ENCODE measurements at regions of chr13 and their contacts with region 1.

Region 1: DNA sequence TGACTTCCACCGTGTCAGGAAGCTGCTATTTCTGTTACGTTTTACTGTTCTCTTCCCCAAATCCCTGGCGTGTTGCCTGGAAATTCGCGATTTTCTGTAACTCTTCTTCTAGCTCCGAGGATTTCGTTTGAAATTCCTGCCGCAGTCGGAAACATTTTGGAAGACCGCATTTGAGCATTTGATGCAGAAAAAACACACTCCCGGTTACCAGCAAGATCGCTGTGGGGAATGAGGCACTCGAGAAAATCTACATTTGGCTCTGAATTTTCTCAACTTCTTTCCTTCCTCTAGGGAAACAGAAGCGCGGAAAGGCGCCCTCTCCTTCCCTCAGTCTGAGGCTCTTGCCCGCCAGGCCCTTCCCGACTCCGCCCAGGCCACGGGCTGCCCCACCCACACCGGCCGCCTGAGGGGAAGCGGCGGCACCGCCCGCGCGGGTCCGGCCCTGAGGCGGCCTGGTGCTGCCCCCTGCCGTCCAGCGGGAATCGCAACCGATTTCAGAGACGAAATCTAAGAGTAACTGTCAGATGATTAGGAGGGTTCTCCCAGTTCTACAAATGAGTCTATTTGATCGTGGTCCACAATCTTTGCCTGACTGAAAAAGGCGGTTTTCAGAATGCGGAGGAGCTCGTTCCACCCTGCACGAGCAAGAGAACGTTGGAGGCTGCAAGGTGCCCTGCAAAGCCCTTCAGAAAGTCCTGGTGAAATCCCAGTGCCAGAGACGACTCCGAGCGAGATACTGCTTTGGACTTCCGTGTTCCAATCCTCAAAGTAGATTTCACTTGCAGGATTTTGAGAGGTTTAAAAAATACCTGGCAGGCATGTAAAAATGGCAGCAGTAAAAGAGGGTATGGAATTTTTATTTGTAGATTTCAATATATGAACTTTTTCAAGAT is 18.4 kb upstream of the TUBGCP3 start:
- DNase-seq: peak; percentile 57
- H3K4me3 ChIP-seq: peak overlapping the region; percentile 66
- H3K27ac ChIP-seq: peak overlapping the region; percentile 69
- H3K27me3 ChIP-seq: peaks cover 12% of the 10 kb centered on the region
- CTCF ChIP-seq: peak; percentile 87

Region 2: DNA sequence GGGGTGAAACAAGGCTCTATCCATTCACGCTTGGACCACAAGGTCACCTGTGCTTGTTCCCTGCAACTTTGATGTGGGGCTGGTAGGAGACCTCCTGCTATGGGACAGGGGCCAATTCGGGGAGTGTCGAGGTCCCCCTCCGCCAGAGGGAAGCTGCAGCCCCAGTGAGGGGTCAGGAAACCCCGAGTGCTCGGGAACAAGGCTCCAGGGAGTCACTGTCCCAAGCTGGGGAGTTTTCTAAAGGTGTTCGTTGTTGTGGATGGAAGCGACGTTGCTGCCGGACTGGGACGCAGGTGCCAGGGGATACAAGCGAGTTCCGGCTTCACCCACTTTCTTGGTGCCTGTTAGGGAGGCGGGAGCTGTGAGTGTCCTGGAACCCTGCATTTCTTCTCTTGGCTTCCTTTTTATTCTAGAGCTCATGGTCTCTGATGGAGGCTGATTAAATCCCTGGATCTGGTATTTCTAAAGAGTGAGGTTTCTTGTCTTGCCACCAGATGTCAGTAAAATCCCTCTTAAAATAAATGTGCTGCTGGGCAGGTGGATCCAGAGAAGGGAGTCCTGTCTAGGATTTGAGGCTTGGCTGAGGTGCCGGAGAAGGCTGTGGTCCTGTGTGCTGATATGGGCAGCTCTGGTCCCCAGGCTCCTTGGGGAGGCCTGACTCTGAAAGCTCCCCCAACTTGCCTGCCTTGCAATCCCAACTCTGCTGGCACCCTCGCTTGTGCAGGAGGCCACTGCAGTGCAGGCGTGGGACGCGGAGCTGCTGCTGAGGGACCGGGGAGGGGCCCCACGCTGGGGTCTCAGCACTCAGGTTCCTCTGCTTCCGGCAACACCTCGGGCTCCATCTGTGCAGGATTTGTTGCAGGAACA is 1132.0 kb before region 1 on chr13:
- CTCF ChIA-PET with region 1: interaction called, 35 read pairs
- POLR2A ChIA-PET with region 1: no interaction called
- DNase-seq: peak; percentile 2
- H3K4me3 ChIP-seq: no peak overlapping the region
- H3K27ac ChIP-seq: no peak overlapping the region
- H3K27me3 ChIP-seq: peaks cover 4% of the 10 kb centered on the region
- CTCF ChIP-seq: peak; percentile 55

Region 3: DNA sequence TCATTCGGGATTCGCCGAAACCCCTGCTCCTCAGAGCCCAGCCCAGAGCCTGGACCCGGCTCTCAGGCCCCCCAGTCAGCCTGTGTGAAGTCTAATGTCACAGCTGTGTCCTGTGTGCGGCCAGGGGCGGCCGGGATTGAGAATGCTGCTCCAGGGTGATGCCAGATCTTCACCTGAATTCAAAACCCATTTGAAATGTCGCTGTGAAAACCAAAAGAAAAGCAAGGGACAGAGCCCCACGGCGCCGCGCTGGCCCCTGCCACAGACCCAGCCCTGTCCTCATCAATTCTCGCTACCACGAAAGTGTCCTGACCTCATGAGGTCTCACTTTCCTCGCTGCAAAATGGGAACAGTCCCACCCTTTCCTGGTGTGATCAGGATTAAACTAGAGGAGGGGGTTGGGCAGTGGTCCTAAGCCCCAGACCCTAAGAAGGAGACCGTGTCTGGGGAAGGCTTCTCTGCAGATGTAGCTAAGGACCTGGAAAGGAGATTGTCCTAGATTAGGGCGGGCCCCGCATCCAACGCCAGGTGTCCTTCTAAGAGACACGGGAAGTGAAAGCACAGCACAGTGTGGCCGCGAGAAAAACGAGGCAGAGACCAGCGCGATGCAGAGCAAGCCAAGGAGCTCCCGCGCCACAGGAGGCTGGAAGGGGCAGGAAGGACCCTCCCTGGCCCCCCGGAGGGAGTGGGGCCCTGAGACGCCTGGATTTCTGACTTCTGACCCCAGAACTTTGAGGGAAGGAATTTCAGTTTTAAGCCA is 264.2 kb before region 1 on chr13:
- CTCF ChIA-PET with region 1: no interaction called
- POLR2A ChIA-PET with region 1: no interaction called
- DNase-seq: no peak
- H3K4me3 ChIP-seq: no peak overlapping the region
- H3K27ac ChIP-seq: no peak overlapping the region
- H3K27me3 ChIP-seq: no peaks in the 10 kb centered on the region
- CTCF ChIP-seq: no peak

Region 4: DNA sequence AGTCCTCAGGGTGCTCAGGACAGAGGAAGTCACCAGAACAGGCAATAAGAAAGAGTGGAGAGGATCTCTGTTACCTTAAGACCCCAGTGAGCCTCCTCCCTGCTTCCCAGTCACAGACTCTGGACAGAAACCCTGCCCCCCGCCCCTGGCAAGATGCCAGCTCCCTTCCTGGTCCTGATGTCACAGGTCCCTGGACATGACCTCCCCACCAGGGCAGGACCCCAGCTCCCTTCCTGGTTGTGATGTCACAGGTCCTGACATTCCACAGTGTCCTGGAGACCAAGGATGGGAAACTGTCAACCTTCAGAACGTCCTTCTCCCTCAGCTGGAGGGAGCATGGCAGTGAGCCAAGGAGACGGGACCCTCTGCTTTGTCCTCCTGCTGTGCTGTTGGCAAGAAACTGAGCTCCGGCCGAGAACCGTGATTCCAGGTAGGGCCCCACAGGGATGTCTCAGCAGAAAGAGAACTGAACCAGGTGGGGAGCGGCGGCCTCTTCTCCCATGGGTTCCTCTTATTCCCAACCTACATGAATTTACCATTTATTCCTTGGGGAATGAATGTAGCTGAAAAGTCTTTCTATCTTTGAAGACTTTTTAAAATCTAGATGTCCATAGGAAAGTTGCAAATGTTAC is 230.2 kb before region 1 on chr13 and contains the start of gene SPACA7:
- CTCF ChIA-PET with region 1: no interaction called
- POLR2A ChIA-PET with region 1: no interaction called
- DNase-seq: no peak
- H3K4me3 ChIP-seq: no peak within 1 kb of the TSS
- H3K27ac ChIP-seq: no peak within 1 kb of the TSS
- H3K27me3 ChIP-seq: no peaks in the 10 kb centered on the region
- CTCF ChIP-seq: no peak
- polyA plus RNA-seq, gene SPACA7: not detected in 2 replicates

Region 5: DNA sequence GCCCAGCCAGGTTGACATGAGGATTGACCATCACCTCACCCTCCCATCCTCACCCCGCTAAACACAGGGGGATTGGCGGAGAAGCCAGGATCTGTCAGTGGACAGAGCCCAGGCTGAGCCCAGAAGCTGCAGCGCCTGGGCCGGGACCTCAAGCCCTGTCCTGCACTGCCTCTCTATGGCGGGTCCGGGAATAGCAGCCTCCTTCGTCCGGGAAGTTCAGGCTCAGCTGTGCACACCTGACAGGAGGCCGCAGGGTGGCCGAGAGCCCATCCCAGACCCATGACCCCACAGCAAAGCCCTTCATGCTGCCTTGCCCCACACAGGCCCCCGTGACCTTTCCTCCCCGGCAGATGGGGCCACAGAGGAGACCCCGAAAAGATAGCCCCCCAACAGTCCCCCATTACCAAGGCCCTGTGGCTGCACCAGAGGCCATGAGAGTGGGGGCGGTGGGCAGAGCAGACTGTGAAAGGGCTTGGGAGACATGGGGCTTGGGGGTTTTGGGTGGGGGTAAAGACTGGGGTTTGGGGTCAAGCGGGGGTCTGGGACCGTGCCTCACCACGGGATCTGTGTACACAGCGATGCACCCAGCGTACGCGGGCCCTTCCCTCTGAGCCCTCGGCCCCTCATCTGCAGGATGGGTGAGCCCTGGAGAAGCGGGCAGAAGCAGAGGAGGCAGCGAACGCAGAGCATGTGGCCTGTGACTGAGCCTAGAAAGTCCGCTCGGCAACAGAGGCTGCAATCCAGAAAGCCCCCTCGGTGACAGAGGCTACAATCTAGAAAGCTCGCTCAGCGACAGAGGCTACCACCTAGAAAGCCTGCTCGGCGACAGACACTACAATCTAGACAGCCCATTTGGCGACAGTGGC is 162.1 kb before region 1 on chr13:
- CTCF ChIA-PET with region 1: interaction called, 10 read pairs
- POLR2A ChIA-PET with region 1: no interaction called
- DNase-seq: no peak
- H3K4me3 ChIP-seq: no peak overlapping the region
- H3K27ac ChIP-seq: no peak overlapping the region
- H3K27me3 ChIP-seq: peaks cover 7% of the 10 kb centered on the region
- CTCF ChIP-seq: peak; percentile 89

Region 6: GRCh38 chr13:112579310-112579843 is 27.0 kb before region 1 on chr13:
- CTCF ChIA-PET with region 1: interaction called, 10 read pairs
- POLR2A ChIA-PET with region 1: no interaction called
- DNase-seq: no peak
- H3K4me3 ChIP-seq: no peak overlapping the region
- H3K27ac ChIP-seq: no peak overlapping the region
- H3K27me3 ChIP-seq: no peaks in the 10 kb centered on the region
- CTCF ChIP-seq: no peak

Region 7: DNA sequence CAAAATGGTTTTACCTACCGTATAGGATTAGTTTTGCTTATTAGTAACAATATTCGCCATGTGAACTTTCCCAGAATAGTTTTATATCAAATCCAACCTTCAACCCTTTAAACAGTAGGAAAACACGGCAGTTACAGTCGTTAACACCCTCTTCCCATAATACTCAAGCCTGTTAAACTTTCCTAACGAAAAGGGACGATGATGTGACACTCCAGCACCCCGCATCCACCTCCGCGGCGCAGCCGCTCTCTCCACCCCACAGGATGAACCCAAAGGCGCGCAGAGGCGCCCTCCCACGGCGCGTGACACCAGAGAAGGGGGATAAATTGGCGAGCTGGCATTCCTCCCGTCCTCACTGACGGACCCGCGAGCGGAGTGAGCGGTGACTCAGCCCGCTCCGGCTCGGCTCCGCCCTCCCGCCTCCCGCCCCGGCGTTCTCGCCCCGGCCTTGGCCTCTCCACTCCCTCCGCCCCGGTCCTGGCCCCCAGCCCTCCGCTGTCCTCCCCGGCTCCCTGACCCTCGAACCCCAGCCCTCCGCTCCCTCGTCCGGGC is 19.1 kb before region 1 on chr13:
- CTCF ChIA-PET with region 1: interaction called, 35 read pairs
- POLR2A ChIA-PET with region 1: no interaction called
- DNase-seq: peak; percentile 67
- H3K4me3 ChIP-seq: peak overlapping the region; percentile 95
- H3K27ac ChIP-seq: peak overlapping the region; percentile 96
- H3K27me3 ChIP-seq: no peaks in the 10 kb centered on the region
- CTCF ChIP-seq: no peak

Region 8: GRCh38 chr13:112616586-112617362 is 10.4 kb after region 1 on chr13:
- CTCF ChIA-PET with region 1: interaction called, 24 read pairs
- POLR2A ChIA-PET with region 1: no interaction called
- DNase-seq: no peak
- H3K4me3 ChIP-seq: no peak overlapping the region
- H3K27ac ChIP-seq: no peak overlapping the region
- H3K27me3 ChIP-seq: peaks cover 28% of the 10 kb centered on the region
- CTCF ChIP-seq: peak; percentile 71

Region 9: DNA sequence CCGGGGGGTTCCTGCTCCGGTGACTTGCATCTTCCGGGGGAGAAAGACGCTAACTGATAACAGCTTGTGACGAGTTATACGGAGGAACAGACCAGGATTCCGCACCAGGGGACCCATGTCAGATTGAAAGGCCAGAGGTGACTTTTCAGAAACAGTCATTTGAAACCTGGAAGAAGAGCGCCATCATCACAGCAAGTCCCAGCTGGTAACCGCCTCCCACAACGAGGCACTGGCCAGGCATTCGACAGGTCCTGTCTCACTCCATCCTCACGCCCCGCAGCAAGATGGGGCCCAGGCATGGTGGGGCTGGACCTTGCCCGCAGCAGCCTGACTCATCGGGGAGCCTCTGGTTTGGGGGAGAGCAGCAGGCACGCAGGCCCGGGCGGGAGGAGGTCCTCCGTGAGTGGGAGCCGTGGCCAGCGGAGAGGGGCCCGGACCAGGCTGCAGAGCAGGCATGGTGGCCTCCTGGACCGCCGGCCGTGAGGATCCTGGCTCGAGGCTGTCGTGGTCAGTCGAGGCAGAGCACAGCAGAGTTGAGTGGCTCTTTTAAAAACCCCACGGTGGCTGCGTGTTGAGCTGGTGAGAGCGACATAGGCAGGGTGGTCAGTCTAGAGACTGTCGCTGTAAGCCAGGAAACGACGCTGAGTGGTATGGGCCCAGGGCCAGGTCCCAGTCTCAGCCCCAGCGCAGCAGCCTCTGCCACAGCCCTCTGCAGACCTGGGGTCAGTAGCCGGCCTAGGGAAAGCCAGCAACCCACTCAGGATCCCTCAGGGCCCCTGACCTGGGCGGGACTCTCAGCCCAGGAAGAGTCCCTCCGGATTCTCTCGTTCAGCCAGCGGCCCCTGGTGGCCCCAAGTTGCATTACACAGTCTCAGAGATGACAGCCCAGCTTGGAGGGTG is 267.7 kb after region 1 on chr13:
- CTCF ChIA-PET with region 1: interaction called, 21 read pairs
- POLR2A ChIA-PET with region 1: no interaction called
- DNase-seq: peak; percentile 10
- H3K4me3 ChIP-seq: no peak overlapping the region
- H3K27ac ChIP-seq: no peak overlapping the region
- H3K27me3 ChIP-seq: no peaks in the 10 kb centered on the region
- CTCF ChIP-seq: peak; percentile 95

Region 10: GRCh38 chr13:113022391-113023216 is 416.2 kb after region 1 on chr13:
- CTCF ChIA-PET with region 1: no interaction called
- POLR2A ChIA-PET with region 1: no interaction called
- DNase-seq: no peak
- H3K4me3 ChIP-seq: no peak overlapping the region
- H3K27ac ChIP-seq: no peak overlapping the region
- H3K27me3 ChIP-seq: peaks cover 34% of the 10 kb centered on the region
- CTCF ChIP-seq: no peak